Gastrocnemius medialis (tissue), 4 donors: ENCODE measurements at regions of chr20 and their contacts with region 1.

Region 1: GRCh38 chr20:34979196-34980153 is 23.8 kb downstream of the MYH7B start:
- DNase-seq: peak; percentile 51 to 85
- ATAC-seq: peak in 1 of 2 donors; percentile 12
- H3K4me3 ChIP-seq: no peak overlapping the region
- H3K27ac ChIP-seq: peak overlapping the region; percentile 89 to 99 (median 94)
- H3K4me1 ChIP-seq: peaks cover 41 to 45% of the 10 kb centered on the region in 2 donors
- H3K27me3 ChIP-seq: peaks cover 0 to 7% (median 0%) of the 10 kb centered on the region in 3 donors
- CTCF ChIP-seq: no peak
- POLR2A ChIP-seq: peak in 1 of 2 donors; percentile 64

Region 2: GRCh38 chr20:34948030-34948429 is 31.4 kb before region 1 on chr20:
- in situ Hi-C with region 1: no loop called
- intact Hi-C with region 1: no loop called
- DNase-seq: no peak
- ATAC-seq: peak; percentile 15 to 49
- H3K4me3 ChIP-seq: no peak overlapping the region
- H3K27ac ChIP-seq: peak overlapping the region; percentile 21 to 68 (median 40)
- H3K4me1 ChIP-seq: peaks cover 29 to 53% of the 10 kb centered on the region in 2 donors
- H3K27me3 ChIP-seq: no peaks in the 10 kb centered on the region
- CTCF ChIP-seq: no peak
- POLR2A ChIP-seq: no peak

Region 3: GRCh38 chr20:35008411-35009342 is 29.2 kb after region 1 on chr20:
- in situ Hi-C with region 1: no loop called
- intact Hi-C with region 1: loop called (anchors 2 kb)
- DNase-seq: peak; percentile 87 to 97
- ATAC-seq: peak; percentile 95 to 97
- H3K4me3 ChIP-seq: no peak overlapping the region
- H3K27ac ChIP-seq: peak overlapping the region; percentile 84 to 95 (median 88)
- H3K4me1 ChIP-seq: peaks cover 10 to 13% of the 10 kb centered on the region in 2 donors
- H3K27me3 ChIP-seq: no peaks in the 10 kb centered on the region
- CTCF ChIP-seq: no peak
- POLR2A ChIP-seq: peak in 1 of 2 donors; percentile 58

Region 4: GRCh38 chr20:35021063-35021462 is 41.6 kb after region 1 on chr20:
- in situ Hi-C with region 1: no loop called
- intact Hi-C with region 1: loop called (anchors 2 kb)
- DNase-seq: peak; percentile 62 to 96
- ATAC-seq: peak; percentile 64 to 67
- H3K4me3 ChIP-seq: no peak overlapping the region
- H3K27ac ChIP-seq: peak overlapping the region; percentile 85 to 95 (median 90)
- H3K4me1 ChIP-seq: peaks cover 49 to 56% of the 10 kb centered on the region in 2 donors
- H3K27me3 ChIP-seq: no peaks in the 10 kb centered on the region
- CTCF ChIP-seq: no peak
- POLR2A ChIP-seq: peak; percentile 18 to 29